Testis (tissue), 5 donors: ENCODE measurements at regions of chr12 and their contacts with region 1.

Region 1: GRCh38 chr12:108618079-108618952 is 15.4 kb downstream of the SELPLG start:
- DNase-seq: peak; percentile 90
- H3K4me3 ChIP-seq: no peak overlapping the region
- H3K27ac ChIP-seq: no peak overlapping the region
- H3K4me1 ChIP-seq: no peaks in the 10 kb centered on the region
- H3K27me3 ChIP-seq: no peaks in the 10 kb centered on the region
- CTCF ChIP-seq: peak; percentile 96 to 99 (median 96)
- POLR2A ChIP-seq: no peak

Region 2: DNA sequence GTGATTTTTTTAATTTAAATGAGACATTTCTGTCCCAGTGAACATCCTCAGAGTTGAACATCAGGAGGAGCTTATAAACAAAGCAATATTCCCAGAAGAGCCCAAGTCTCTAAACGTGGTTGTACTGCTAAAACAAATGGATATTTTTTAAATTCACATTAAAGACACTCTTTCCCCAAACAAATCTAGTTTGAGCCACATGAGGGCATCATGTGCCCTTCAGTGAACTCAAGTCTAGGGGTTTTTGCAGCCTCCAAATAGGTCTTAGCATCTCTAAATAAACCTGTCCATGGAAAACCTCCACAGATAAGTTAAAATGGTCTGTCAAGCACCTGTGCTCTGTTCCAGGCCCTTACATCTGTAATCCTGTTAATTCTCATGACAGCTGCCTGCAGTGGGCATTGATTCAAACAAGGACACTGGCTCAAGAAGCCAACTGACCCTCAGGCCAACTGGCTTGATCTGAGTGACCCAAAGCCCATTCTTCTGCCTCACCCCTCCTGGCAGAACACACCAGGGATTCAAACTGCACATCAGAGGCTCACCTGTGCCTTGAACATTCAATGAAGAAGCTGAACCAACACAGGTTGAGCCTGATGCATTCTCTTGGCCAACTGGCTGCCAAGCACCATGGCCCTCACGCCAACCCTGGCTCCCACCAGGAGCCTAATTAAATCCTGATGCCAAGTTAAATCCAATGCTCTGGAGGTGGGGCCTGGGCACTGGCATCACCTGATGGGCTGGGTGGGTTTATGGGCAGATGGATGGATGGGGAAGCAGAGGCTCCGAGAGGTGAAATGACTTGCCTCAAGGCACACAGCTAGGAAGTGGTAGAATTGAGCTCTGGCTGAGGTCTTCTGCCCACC is 47.3 kb before region 1 on chr12:
- intact Hi-C with region 1: loop called (anchors 5 kb)
- DNase-seq: peak; percentile 12
- H3K4me3 ChIP-seq: no peak overlapping the region
- H3K27ac ChIP-seq: no peak overlapping the region
- H3K4me1 ChIP-seq: peaks cover 18% of the 10 kb centered on the region
- H3K27me3 ChIP-seq: no peaks in the 10 kb centered on the region
- CTCF ChIP-seq: peak in 2 of 3 experiments; percentile 23 to 28
- POLR2A ChIP-seq: no peak